Caco-2 (cell line): ENCODE measurements at regions of chr22 and their contacts with region 1.

Region 1: GRCh38 chr22:35043252-35043931 is 22.6 kb upstream of the ISX start:
- DNase-seq: peak in 1 of 2 experiments; percentile 66
- H3K4me3 ChIP-seq: no peak overlapping the region
- H3K4me3 Mint-ChIP-seq: no peak overlapping the region
- H3K27ac Mint-ChIP-seq: no peak overlapping the region
- H3K4me1 ChIP-seq: peaks cover 5% of the 10 kb centered on the region; the same call in 1 of the 2 replicates
- H3K4me1 Mint-ChIP-seq: no peaks in the 10 kb centered on the region
- H3K27me3 ChIP-seq: no peaks in the 10 kb centered on the region
- H3K27me3 Mint-ChIP-seq: peaks cover 3% of the 10 kb centered on the region
- CTCF ChIP-seq: peak; percentile 56 to 58

Region 2: GRCh38 chr22:35054064-35054463 is 10.7 kb after region 1 on chr22:
- CTCF ChIA-PET with region 1: no interaction called
- POLR2A ChIA-PET with region 1: no interaction called
- intact Hi-C with region 1: no loop called
- DNase-seq: no peak
- H3K4me3 ChIP-seq: no peak overlapping the region
- H3K4me3 Mint-ChIP-seq: no peak overlapping the region
- H3K27ac Mint-ChIP-seq: no peak overlapping the region
- H3K4me1 ChIP-seq: no peaks in the 10 kb centered on the region
- H3K4me1 Mint-ChIP-seq: no peaks in the 10 kb centered on the region
- H3K27me3 ChIP-seq: no peaks in the 10 kb centered on the region
- H3K27me3 Mint-ChIP-seq: no peaks in the 10 kb centered on the region
- CTCF ChIP-seq: no peak

Region 3: DNA sequence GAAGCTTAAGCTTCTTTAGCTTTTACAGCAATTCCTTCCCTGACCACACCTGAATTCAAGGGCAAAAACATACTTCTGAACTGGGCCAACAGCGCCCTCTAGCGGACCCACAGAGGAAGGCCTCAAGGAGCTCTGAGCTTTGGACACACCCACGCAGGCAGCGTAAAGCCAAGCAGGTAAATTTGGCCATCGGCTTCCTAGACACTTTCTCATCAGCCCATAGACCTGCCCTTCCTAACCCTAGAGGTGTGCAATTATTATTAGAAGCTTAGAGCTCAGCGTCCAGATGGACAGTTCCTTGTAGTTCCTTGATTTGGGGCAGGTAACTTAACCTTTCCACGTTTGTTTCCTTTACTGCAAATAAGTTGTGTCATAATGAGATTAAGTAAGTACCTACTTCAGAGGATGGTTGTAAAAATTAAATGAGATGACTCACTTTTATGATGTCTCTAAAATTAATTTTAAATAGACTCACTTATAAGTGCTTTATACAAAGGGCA is 188.2 kb after region 1 on chr22:
- CTCF ChIA-PET with region 1: interaction called, 8 read pairs
- POLR2A ChIA-PET with region 1: no interaction called
- intact Hi-C with region 1: loop called (anchors 1 kb)
- DNase-seq: peak; percentile 73 to 81
- H3K4me3 ChIP-seq: no peak overlapping the region
- H3K4me3 Mint-ChIP-seq: no peak overlapping the region
- H3K27ac Mint-ChIP-seq: no peak overlapping the region
- H3K4me1 ChIP-seq: no peaks in the 10 kb centered on the region
- H3K4me1 Mint-ChIP-seq: no peaks in the 10 kb centered on the region
- H3K27me3 ChIP-seq: no peaks in the 10 kb centered on the region
- H3K27me3 Mint-ChIP-seq: peaks cover 15% of the 10 kb centered on the region
- CTCF ChIP-seq: peak; percentile 94

Region 4: DNA sequence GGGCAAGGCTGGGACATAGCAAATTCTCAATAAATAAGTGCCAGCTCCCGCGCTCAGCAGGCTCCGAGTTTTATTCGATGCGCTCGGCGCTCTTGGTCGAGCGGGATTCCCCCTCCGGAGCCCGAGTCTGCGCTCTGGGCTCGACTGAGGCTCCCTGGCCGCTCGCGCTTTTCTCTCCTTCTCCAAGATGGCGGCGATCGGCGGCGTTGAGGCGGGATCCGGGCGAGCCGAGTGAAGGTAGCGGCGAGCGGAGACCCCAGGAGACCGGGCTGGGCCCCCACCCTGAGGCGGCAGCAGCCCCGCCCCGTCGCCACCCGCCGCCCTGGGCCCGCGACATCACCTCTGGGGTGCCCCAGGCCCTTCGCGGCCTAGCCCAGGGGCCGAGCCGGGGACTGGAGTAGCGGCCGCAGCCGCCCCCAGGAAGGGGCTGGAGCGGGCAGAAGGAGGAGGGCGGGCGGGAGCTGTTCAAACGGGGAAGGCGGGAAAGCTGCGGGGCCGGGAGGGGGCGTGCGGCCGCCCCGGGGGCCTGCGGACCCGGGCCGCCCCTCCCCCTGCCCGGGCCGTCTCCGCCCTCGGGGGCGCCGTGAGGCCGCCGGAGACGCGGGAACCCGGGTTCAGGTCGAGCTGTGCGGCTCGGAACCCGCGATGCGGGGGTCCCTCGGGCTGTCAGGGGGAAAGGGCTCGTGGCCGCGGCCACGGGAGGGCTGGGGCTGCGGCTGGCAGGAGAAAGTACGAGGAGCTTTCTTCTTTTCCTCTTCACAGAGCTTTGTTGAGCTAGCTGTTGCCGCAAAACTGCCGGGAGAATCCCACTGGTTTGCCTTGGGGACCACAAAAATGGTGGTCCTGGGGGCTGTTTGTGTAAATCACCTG is 214.2 kb after region 1 on chr22 and contains the start of gene HMGXB4:
- CTCF ChIA-PET with region 1: no interaction called
- POLR2A ChIA-PET with region 1: no interaction called
- intact Hi-C with region 1: no loop called
- DNase-seq: peak; percentile 89 to 90
- H3K4me3 ChIP-seq: peak within 1 kb of the TSS; percentile 65
- H3K4me3 Mint-ChIP-seq: peak within 1 kb of the TSS; percentile 75
- H3K27ac Mint-ChIP-seq: peak within 1 kb of the TSS; percentile 89
- H3K4me1 ChIP-seq: no peaks in the 10 kb centered on the region
- H3K4me1 Mint-ChIP-seq: peaks cover 21% of the 10 kb centered on the region
- H3K27me3 ChIP-seq: no peaks in the 10 kb centered on the region
- H3K27me3 Mint-ChIP-seq: no peaks in the 10 kb centered on the region
- CTCF ChIP-seq: peak; percentile 20 to 22
- total RNA-seq, gene HMGXB4: 22.3 and 22.6 TPM in 2 replicates